HepG2 (cell line): ENCODE measurements at regions of chr10 and their contacts with region 1.

Region 1: DNA sequence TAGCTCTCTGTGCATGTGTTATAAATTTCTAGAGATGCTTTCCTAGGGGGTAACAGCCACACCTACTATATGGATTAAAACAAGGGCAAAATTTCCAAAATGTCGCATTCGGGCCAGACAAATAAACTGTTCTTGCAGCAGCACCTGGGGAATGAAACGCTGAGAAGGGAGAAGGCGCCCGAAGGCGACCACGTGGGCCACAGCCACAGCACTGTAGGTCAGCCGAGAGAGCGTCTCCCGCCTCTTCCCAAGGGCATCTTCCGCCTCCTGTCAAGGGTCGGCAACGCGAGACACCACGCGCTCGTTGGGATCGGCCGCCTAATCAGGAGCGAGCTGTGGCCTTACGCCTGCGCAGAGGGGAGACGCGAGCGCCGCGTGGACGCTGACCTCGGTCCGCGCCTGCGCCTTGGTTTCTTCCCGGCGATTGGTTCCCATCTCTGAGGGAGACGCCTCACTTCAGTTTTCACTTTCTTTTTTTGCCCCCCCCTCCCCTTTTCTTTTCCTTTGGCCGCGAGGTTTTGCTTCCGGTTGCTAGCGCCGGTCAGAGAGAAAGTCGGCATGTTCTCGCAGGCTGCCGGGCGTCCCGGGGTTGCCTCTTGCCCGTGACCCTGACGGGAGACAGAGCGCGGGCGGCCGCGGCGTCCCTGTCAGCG is at the start of gene TASOR2:
- DNase-seq: peak; percentile 95
- ATAC-seq: peak; percentile 91
- H3K4me3 ChIP-seq: peak within 1 kb of the TSS; percentile 86 to 94 (median 89)
- H3K27ac ChIP-seq: peak within 1 kb of the TSS; percentile 86
- H3K4me1 ChIP-seq: peaks cover 63% of the 10 kb centered on the region
- H3K27me3 ChIP-seq: peaks cover 0 to 1% of the 10 kb centered on the region in 2 experiments; a peak in 3 of 5 replicates
- CTCF ChIP-seq: peak; percentile 31; the same call in 1 of the 2 replicates
- EP300 ChIP-seq: 0 out of 4 replicates have a peak, but pooled peaks of 1 of the 2 experiments have one; percentile 20
- POLR2A ChIP-seq: peak; percentile 31 to 72; a peak in 3 of 4 replicates
- RAD21 ChIP-seq: no peak
- total RNA-seq, gene TASOR2: 55.3 and 58.9 TPM in 2 replicates

Region 2: GRCh38 chr10:5659702-5660528 is 24.5 kb before region 1 on chr10:
- CTCF ChIA-PET with region 1: no interaction called
- POLR2A ChIA-PET with region 1: interaction called, 15 read pairs
- in situ Hi-C with region 1: no loop called
- intact Hi-C with region 1: loop called (anchors 2 kb)
- DNase-seq: peak; percentile 96
- ATAC-seq: peak; percentile 86
- H3K4me3 ChIP-seq: peak overlapping the region; percentile 48 to 72 (median 58); a peak in 5 of 6 replicates
- H3K27ac ChIP-seq: peak overlapping the region; percentile 83
- H3K4me1 ChIP-seq: peaks cover 64% of the 10 kb centered on the region
- H3K27me3 ChIP-seq: no peaks in the 10 kb centered on the region
- CTCF ChIP-seq: peak; percentile 58
- EP300 ChIP-seq: peak in 1 of 2 experiments; percentile 73; a peak in 2 of 4 replicates
- POLR2A ChIP-seq: peak in 1 of 2 experiments; percentile 5; a peak in 1 of 4 replicates
- RAD21 ChIP-seq: no peak